Ovary (tissue), 10 donors: ENCODE measurements at regions of chr1 and their contacts with region 1.

Region 1: DNA sequence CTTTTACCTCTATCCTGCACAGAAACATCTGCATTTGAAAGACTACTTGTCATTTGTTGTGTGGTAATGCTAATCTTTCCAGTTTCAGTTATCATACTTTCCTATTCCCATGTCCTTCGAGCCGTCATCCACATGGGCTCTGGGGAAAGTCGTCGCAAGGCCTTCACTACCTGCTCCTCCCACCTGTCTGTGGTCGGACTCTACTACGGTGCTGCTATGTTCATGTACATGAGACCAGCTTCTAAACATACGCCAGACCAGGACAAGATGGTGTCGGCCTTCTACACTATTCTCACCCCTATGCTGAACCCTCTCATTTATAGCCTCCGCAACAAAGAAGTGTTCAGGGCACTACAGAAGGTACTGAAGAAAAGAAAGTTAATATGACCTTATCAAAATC is 8.3 kb downstream of the OR2M4 start:
- DNase-seq: no peak
- H3K4me3 ChIP-seq: no peak overlapping the region
- H3K27ac ChIP-seq: no peak overlapping the region
- H3K4me1 ChIP-seq: no peaks in the 10 kb centered on the region
- H3K27me3 ChIP-seq: no peaks in the 10 kb centered on the region
- CTCF ChIP-seq: no peak
- EP300 ChIP-seq: no peak
- POLR2A ChIP-seq: no peak

Region 2: GRCh38 chr1:247043406-247043805 is 1196.1 kb before region 1 on chr1:
- intact Hi-C with region 1: loop called in 1 of 4 experiments (anchors 10 kb)
- DNase-seq: no peak
- H3K4me3 ChIP-seq: no peak overlapping the region
- H3K27ac ChIP-seq: no peak overlapping the region
- H3K4me1 ChIP-seq: no peaks in the 10 kb centered on the region
- H3K27me3 ChIP-seq: no peaks in the 10 kb centered on the region
- CTCF ChIP-seq: no peak
- EP300 ChIP-seq: no peak
- POLR2A ChIP-seq: no peak

Region 3: DNA sequence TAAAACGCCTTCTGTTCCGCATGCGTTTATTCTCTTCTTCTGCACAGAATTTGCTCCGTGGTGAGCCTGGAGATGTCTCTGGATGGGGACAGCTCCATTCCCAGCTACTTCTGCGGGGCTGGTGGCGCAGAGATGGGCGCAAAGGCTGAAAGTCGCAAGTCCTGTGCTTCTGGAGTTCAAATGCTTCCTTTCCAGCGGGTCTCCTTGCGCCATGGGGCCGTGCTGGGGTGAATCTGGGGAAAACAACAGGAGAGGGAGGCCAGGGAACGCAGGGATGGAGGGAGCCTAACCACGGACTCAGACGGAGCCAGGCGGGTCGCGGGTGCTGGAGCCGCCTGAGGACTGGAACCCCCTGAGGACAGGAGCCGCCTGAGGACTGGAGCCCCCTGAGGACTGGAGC is 66.6 kb after region 1 on chr1:
- intact Hi-C with region 1: no loop called
- DNase-seq: no peak
- H3K4me3 ChIP-seq: no peak overlapping the region
- H3K27ac ChIP-seq: no peak overlapping the region
- H3K4me1 ChIP-seq: no peaks in the 10 kb centered on the region
- H3K27me3 ChIP-seq: no peaks in the 10 kb centered on the region
- CTCF ChIP-seq: no peak
- EP300 ChIP-seq: no peak
- POLR2A ChIP-seq: no peak

Region 4: GRCh38 chr1:248404024-248404423 is 164.5 kb after region 1 on chr1:
- intact Hi-C with region 1: no loop called
- DNase-seq: no peak
- H3K4me3 ChIP-seq: no peak overlapping the region
- H3K27ac ChIP-seq: no peak overlapping the region
- H3K4me1 ChIP-seq: no peaks in the 10 kb centered on the region
- H3K27me3 ChIP-seq: no peaks in the 10 kb centered on the region
- CTCF ChIP-seq: no peak
- EP300 ChIP-seq: no peak
- POLR2A ChIP-seq: no peak

Region 5: DNA sequence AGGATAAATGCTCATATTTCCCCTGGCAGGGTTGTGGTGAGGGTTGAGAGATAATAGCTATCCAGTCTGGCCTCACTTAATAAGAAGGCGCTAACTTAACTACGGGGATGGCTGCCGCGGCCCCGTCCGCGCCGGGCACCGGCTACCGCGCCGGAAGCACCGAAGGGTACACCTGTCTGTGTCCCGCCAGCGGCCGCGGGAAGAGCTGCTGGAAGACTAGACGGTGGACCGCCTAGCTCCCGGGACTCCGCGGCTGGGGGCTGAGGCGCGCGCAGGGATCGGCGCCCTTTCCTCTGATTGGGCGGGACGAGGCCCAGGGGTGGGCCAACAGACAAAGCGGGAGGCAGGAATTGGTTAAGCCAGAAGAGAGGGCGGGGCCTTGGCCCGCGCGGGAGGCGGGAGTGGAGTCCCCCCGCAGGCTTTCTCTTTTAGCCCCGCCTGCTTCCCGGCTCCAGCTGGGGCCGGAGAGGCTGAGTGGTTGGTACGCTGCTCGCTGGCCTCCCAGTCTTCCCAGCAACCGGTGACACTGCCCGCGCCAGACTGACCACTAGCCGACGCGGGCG is 598.4 kb after region 1 on chr1 and contains the start of gene ZNF672:
- intact Hi-C with region 1: no loop called
- DNase-seq: peak; percentile 97 to 99 (median 98)
- H3K4me3 ChIP-seq: peak within 1 kb of the TSS; percentile 99
- H3K27ac ChIP-seq: peak within 1 kb of the TSS; percentile 95 to 96
- H3K4me1 ChIP-seq: no peaks in the 10 kb centered on the region
- H3K27me3 ChIP-seq: no peaks in the 10 kb centered on the region
- CTCF ChIP-seq: peak in 1 of 3 donors; percentile 8
- EP300 ChIP-seq: no peak
- POLR2A ChIP-seq: peak; percentile 90
- total RNA-seq, gene ZNF672: 15.1 to 29.5 (median 21.6) TPM